GM12878 (cell line): ENCODE measurements at regions of chr9 and their contacts with region 1.

Region 1: DNA sequence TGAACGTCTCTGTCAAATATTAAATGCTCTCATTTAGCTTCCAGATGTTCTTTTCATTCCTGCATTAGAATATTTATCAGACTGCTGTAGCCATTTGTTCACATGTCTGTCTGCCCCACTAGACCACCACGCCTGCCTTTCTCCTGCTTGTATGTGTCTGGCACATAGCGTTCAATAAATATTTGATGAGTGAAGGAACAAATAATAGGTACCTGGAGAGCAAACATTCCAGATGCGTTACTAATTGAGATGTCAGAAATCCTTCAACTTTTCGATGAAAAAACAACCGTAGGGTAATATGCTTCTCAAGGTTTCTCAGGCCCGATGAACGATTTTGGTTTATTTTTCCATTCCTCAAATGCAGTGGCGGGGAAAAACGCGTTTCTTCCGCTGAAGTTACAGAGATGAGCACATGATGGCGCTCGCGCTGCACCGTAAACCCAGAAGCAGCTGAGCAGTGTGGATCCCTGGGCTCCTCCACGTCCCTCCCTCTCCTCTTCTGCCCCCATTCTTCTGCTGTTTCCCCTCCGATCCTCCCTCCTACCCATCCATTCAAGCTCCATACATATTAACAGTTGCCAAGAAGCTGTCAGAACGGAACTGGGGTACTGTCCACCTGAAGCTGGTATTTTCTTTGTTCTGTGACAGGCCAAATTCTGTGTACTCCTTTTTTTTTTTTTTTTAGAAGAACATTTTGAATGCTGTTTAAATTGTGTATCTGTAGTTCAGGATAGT is 245.4 kb downstream of the MPDZ start:
- DNase-seq: no peak
- ATAC-seq: peak; percentile 63
- H3K4me3 ChIP-seq: no peak overlapping the region
- H3K27ac ChIP-seq: no peak overlapping the region
- H3K4me1 ChIP-seq: no peaks in the 10 kb centered on the region
- H3K27me3 ChIP-seq: no peaks in the 10 kb centered on the region
- CTCF ChIP-seq: peak; percentile 40 to 61 (median 54); a peak in 5 of 6 replicates
- EP300 ChIP-seq: no peak
- POLR2A ChIP-seq: no peak
- RAD21 ChIP-seq: peak; percentile 50

Region 2: DNA sequence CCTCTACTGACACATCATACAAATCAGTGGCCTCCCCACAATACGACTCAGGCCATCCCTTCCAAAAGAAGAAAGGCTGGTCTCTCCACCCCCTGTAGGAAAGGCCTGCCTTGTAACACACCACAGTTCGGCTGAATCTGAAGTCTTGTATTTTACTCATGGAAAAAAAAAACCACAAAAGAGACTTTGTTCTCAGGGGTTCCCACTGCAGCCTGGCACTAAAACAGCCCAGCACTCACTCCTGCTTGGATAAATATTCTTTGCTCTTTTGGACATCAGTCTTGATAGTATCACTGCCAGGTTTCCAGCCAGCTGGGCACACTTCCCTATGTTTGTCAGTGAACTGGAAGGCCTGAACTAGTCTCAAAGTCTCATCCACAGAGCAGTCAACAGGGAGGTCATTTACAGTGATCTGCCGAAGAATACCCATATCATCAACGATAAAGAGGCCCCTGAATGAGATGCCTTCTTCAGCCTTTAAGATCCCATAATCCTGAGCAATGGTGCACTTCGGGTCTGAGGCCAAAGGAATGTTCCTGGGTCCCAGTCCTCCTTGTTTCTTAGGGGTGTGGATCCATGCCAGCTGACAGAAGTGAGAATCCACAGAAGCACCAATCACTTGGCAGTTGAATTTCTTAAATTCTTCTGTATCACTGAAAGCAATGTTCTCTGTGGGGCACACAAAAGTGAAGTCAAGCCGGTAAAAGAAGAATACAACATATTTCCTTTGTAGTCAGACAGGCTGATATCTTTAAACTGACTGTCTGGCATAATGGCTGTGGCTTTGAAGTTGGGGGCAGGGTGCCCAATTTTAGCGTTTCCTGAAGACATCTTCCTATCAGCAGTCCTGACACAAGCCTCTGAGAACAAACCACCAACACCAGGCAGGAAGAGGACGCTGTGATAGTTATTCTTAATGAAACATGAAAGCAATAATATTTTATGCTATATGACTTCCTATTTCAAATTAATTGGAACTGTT is 61.2 kb before region 1 on chr9:
- CTCF ChIA-PET with region 1: no interaction called
- POLR2A ChIA-PET with region 1: no interaction called
- RAD21 ChIA-PET with region 1: no interaction called
- SMC1A ChIA-PET with region 1: no interaction called
- in situ Hi-C with region 1: loop called (anchors 10 kb)
- intact Hi-C with region 1: no loop called
- DNase-seq: no peak
- ATAC-seq: no peak
- H3K4me3 ChIP-seq: no peak overlapping the region
- H3K27ac ChIP-seq: no peak overlapping the region
- H3K4me1 ChIP-seq: no peaks in the 10 kb centered on the region
- H3K27me3 ChIP-seq: no peaks in the 10 kb centered on the region
- CTCF ChIP-seq: no peak
- EP300 ChIP-seq: no peak
- POLR2A ChIP-seq: no peak
- RAD21 ChIP-seq: no peak

Region 3: GRCh38 chr9:13100914-13101572 is 66.9 kb after region 1 on chr9:
- CTCF ChIA-PET with region 1: no interaction called
- POLR2A ChIA-PET with region 1: no interaction called
- RAD21 ChIA-PET with region 1: no interaction called
- SMC1A ChIA-PET with region 1: no interaction called
- in situ Hi-C with region 1: no loop called
- intact Hi-C with region 1: no loop called
- DNase-seq: no peak
- ATAC-seq: no peak
- H3K4me3 ChIP-seq: no peak overlapping the region
- H3K27ac ChIP-seq: no peak overlapping the region
- H3K4me1 ChIP-seq: no peaks in the 10 kb centered on the region
- H3K27me3 ChIP-seq: no peaks in the 10 kb centered on the region
- CTCF ChIP-seq: no peak
- EP300 ChIP-seq: no peak
- POLR2A ChIP-seq: no peak
- RAD21 ChIP-seq: no peak